Activated B cell treated with CpG ODN at 0.5 μM for 24 hours (primary cell): ENCODE measurements at regions of chr5 and their contacts with region 1.

Region 1: DNA sequence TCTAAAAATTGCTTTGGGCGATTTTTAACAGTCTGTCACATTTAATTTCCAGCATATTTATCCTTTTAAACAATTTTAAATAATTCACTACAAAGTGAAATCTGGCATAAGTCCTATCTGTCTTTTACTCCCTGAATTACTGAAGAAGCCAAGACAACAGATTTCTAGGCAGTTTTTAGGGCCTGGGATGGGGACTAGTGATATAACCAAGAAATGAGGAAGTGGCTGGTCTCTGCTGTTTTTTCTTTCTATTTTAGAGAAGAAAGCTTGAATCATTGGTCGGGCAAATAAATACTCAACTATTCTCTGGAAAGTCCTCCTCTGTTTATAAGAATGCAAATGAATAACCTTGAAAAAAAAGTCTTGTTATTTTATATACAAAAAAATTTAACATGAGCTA is 79.7 kb upstream of the SSBP2 start:
- DNase-seq: no peak
- ATAC-seq: peak; percentile 37
- H3K4me3 Mint-ChIP-seq: no peak overlapping the region
- H3K27ac Mint-ChIP-seq: no peak overlapping the region
- H3K4me1 Mint-ChIP-seq: peaks cover 6% of the 10 kb centered on the region
- H3K27me3 Mint-ChIP-seq: no peaks in the 10 kb centered on the region
- CTCF ChIP-seq: no peak

Region 2: DNA sequence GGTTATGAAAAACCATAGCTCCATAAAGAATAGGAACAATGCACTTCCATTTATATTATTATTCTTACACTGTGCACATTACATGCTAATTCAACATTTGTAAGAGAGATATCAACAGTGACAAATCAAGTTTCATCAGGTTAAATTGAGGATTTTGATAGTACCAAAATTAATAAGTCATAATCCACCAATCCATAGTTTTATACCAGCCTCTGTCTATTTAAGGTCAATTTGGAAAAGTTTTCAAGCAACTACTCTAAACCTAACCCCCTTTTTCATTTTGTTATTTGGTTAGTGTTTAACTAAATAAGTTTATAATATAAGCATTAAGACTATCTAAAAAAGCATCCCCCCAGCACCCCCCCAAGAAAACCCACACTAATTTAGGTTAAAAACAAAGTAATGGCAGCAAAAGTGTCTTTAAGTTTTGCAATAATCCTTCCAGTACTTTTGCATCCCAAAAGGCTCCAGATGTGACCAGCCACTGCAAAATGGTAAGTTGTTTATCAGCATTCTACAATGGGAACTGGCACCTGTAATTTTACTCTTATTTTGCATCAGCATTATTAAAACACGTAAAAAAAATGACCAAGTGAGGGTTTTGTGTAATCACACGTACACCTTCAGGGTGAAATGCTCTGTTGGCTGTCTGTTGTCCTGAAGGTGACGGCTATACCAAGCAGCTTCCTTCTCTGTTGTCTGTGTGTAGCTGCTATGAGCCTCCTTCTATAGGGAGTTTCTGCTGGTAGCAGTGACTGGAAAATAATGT is 42.9 kb before region 1 on chr5:
- CTCF ChIA-PET with region 1: no interaction called
- POLR2A ChIA-PET with region 1: no interaction called
- intact Hi-C with region 1: loop called (anchors 5 kb)
- DNase-seq: no peak
- ATAC-seq: no peak
- H3K4me3 Mint-ChIP-seq: no peak overlapping the region
- H3K27ac Mint-ChIP-seq: no peak overlapping the region
- H3K4me1 Mint-ChIP-seq: peaks cover 4% of the 10 kb centered on the region
- H3K27me3 Mint-ChIP-seq: no peaks in the 10 kb centered on the region
- CTCF ChIP-seq: no peak